ENCODE measurements at regions of chr20 and their contacts with region 1.

Region 1: DNA sequence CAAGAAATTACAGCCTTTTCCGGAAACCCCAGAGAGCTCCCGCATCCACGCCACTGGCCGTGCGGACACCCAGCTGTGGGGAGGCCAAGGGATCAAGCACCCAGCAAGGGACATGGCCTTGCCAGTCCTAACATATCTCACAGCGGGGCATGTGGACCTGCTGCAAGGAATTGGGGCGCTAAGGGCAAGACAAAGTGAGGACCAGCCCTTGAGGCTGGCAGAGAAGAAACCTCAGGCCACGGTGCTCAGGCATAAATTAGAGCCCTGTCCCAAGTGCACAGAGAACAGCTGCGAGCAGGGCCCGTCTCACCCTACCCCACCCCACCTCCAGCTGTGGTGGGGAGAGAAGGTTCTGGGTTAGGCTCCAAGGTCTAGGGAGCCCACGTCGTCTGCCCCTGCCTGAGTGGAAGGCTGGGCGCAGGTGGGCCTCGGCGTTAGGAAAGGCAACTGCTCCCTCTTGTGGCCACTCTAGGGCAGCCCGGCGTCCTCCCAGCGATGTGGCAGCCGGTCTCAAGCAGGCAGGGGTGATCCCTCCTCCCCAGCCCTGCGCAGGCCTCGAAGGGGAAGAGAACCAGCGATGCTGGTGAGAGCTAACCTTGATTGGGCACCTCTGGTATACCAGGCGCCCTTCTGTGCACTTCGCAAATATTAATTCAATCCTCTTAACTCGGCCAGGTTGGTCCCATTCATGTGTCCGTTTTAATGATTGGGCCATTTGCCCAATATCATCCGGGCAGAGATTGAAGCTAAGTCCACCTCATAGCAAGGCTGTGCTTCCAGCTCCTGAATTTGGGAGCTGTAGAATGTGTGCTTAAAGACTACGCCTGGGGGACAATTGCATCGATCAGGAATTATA is 235.8 kb downstream of the NFATC2 start:
- DNase-seq: peak; percentile 90
- H3K4me3 ChIP-seq: peak overlapping the region in 1 of 2 experiments; percentile 35; a peak in 1 of 4 replicates
- H3K27ac ChIP-seq: peak overlapping the region in 1 of 2 experiments; percentile 22; a peak in 1 of 4 replicates
- H3K4me1 ChIP-seq: peaks cover 0 to 13% of the 10 kb centered on the region in 2 experiments; a peak in 1 of 4 replicates
- H3K27me3 ChIP-seq: no peaks in the 10 kb centered on the region
- CTCF ChIP-seq: peak; percentile 88
- EP300 ChIP-seq: no peak
- RAD21 ChIP-seq: peak; percentile 98

Region 2: DNA sequence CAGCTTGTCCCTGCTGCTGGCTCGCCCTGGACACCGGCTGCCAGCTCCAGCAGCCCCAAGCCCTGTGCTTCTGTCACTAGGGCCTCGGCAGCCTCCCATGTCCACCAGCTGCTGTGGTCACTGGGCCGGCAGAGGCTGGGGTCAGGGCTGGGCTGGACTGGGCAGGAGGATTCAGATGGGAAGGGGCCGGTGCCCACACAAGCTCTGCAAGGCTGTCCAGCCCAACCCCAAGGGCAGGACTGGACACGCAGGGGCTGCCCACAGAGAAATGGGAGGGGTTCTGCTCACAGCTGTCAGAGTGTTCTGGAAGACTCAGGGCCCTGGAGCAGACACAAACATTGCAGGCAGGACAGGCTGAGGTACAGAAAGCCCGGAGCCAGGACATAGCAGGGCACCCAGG is 441.1 kb before region 1 on chr20:
- CTCF ChIA-PET with region 1: no interaction called
- POLR2A ChIA-PET with region 1: no interaction called
- DNase-seq: no peak
- H3K4me3 ChIP-seq: no peak overlapping the region
- H3K27ac ChIP-seq: no peak overlapping the region
- H3K4me1 ChIP-seq: peaks cover 0 to 11% of the 10 kb centered on the region in 2 experiments; a peak in 1 of 4 replicates
- H3K27me3 ChIP-seq: no peaks in the 10 kb centered on the region
- CTCF ChIP-seq: no peak
- EP300 ChIP-seq: no peak
- RAD21 ChIP-seq: no peak

Region 3: DNA sequence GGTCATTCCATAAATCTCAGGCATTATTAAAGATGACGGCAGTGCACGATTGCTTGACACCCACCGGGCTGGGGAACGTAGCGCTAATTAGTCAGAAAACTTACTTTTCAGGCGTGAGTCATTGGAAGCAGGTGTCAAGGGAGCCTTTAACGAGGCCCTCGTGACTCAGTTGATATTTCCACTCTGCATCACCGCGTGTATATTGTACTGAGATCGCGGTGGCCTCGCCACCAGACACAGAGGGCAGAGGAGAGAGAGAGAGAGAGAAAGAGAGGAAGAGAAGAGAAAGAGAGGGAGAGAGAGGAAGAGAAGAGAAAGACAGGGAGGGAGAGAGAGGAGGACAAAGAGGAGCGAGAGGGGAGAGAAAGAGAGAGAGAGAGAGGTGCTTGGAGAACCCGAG is 305.0 kb before region 1 on chr20:
- CTCF ChIA-PET with region 1: interaction called, 33 read pairs
- POLR2A ChIA-PET with region 1: no interaction called
- DNase-seq: no peak
- H3K4me3 ChIP-seq: no peak overlapping the region
- H3K27ac ChIP-seq: no peak overlapping the region
- H3K4me1 ChIP-seq: no peaks in the 10 kb centered on the region
- H3K27me3 ChIP-seq: no peaks in the 10 kb centered on the region
- CTCF ChIP-seq: no peak
- EP300 ChIP-seq: no peak
- RAD21 ChIP-seq: no peak

Region 4: GRCh38 chr20:51029963-51030920 is 276.5 kb before region 1 on chr20:
- CTCF ChIA-PET with region 1: interaction called, 11 read pairs
- POLR2A ChIA-PET with region 1: no interaction called
- DNase-seq: no peak
- H3K4me3 ChIP-seq: no peak overlapping the region
- H3K27ac ChIP-seq: no peak overlapping the region
- H3K4me1 ChIP-seq: peaks cover 0 to 18% of the 10 kb centered on the region in 2 experiments; a peak in 2 of 4 replicates
- H3K27me3 ChIP-seq: no peaks in the 10 kb centered on the region; the same call in 1 of the 2 replicates
- CTCF ChIP-seq: no peak
- EP300 ChIP-seq: no peak
- RAD21 ChIP-seq: no peak

Region 5: DNA sequence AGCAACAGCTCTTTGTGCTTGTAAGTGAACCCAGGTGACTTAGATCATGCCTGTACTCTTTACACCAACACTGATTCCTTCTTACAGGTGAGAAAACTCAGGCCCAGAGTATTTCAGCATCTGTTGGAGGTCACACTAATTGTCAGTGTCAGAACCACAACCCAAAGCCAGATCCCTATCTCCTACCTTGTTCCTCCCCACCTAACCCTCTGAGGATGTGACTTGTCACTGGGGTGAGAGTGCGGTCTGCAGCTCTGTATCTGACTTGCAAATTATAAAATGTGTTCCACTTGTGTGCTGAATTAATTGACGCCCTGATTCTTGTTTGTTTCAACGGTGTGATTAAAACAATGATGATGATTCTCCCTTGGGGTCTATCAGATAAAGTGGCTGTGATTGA is 51.3 kb before region 1 on chr20:
- CTCF ChIA-PET with region 1: interaction called, 12 read pairs
- POLR2A ChIA-PET with region 1: no interaction called
- DNase-seq: no peak
- H3K4me3 ChIP-seq: no peak overlapping the region
- H3K27ac ChIP-seq: no peak overlapping the region
- H3K4me1 ChIP-seq: peaks cover 0 to 9% of the 10 kb centered on the region in 2 experiments; a peak in 1 of 4 replicates
- H3K27me3 ChIP-seq: no peaks in the 10 kb centered on the region
- CTCF ChIP-seq: no peak
- EP300 ChIP-seq: no peak
- RAD21 ChIP-seq: no peak

Region 6: DNA sequence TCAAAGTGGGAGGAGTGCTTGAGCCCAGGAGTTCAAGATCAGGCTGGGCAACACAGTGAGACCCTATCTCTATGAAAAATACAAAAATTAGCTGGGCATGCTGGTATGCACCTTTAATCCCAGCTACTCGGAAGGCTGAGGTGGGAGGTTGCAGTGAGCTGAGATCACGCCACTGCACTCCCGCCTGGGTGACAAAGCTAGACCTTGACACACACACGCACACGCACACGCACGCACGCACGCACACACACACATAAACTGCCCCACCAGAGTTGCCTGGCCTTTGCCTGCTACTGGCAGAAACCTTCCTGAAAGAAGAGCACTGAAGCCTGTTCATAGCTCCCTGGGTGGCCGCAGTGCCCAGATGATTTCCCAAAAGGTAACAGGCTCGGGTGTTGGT is 11.2 kb before region 1 on chr20:
- CTCF ChIA-PET with region 1: interaction called, 18 read pairs
- POLR2A ChIA-PET with region 1: no interaction called
- DNase-seq: no peak
- H3K4me3 ChIP-seq: no peak overlapping the region
- H3K27ac ChIP-seq: no peak overlapping the region
- H3K4me1 ChIP-seq: peaks cover 0 to 7% of the 10 kb centered on the region in 2 experiments; a peak in 1 of 4 replicates
- H3K27me3 ChIP-seq: no peaks in the 10 kb centered on the region
- CTCF ChIP-seq: no peak
- EP300 ChIP-seq: no peak
- RAD21 ChIP-seq: no peak

Region 7: GRCh38 chr20:51428401-51429143 is 121.8 kb after region 1 on chr20:
- CTCF ChIA-PET with region 1: no interaction called
- POLR2A ChIA-PET with region 1: no interaction called
- DNase-seq: peak; percentile 55
- H3K4me3 ChIP-seq: no peak overlapping the region
- H3K27ac ChIP-seq: peak overlapping the region; percentile 43 to 51; a peak in 2 of 4 replicates
- H3K4me1 ChIP-seq: peaks cover 0 to 11% of the 10 kb centered on the region in 2 experiments; a peak in 1 of 4 replicates
- H3K27me3 ChIP-seq: no peaks in the 10 kb centered on the region
- CTCF ChIP-seq: no peak
- EP300 ChIP-seq: peak in 1 of 2 experiments; percentile 16; a peak in 1 of 4 replicates
- RAD21 ChIP-seq: no peak

Region 8: DNA sequence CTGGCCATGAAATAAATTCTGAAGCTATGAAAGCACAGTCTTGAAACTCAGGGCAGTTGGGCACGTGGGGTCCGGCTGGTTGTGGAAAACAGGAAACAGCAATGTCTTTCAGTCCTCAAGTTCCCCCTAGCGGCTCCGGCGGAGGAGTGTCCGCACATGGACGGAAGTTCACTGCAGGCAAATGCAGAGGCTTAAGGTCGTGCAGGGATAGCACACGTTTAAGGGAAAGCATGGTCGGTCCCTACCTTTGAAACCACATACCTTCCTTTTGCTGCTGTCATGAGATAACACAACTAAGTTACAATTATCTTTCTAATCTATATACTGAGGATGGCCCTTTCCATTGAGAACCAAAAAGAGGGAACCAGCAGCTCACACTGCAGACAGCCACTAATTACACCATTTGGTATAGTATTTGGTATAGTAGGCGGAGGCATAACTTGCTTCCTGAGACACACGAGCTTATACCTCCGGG is 288.4 kb after region 1 on chr20:
- CTCF ChIA-PET with region 1: interaction called, 10 read pairs
- POLR2A ChIA-PET with region 1: no interaction called
- DNase-seq: peak; percentile 83
- H3K4me3 ChIP-seq: no peak overlapping the region; a peak in 1 of 4 replicates
- H3K27ac ChIP-seq: peak overlapping the region in 1 of 2 experiments; percentile 50; a peak in 1 of 4 replicates
- H3K4me1 ChIP-seq: peaks cover 6 to 12% of the 10 kb centered on the region in 2 experiments; a peak in 2 of 4 replicates
- H3K27me3 ChIP-seq: no peaks in the 10 kb centered on the region
- CTCF ChIP-seq: peak; percentile 90
- EP300 ChIP-seq: no peak
- RAD21 ChIP-seq: peak; percentile 96

Region 9: GRCh38 chr20:51750037-51750763 is 443.5 kb after region 1 on chr20:
- CTCF ChIA-PET with region 1: no interaction called
- POLR2A ChIA-PET with region 1: no interaction called
- DNase-seq: peak; percentile 36
- H3K4me3 ChIP-seq: no peak overlapping the region
- H3K27ac ChIP-seq: peak overlapping the region; percentile 9 to 96; a peak in 3 of 4 replicates
- H3K4me1 ChIP-seq: peaks cover 8 to 22% of the 10 kb centered on the region in 2 experiments; a peak in 3 of 4 replicates
- H3K27me3 ChIP-seq: no peaks in the 10 kb centered on the region
- CTCF ChIP-seq: no peak
- EP300 ChIP-seq: peak in 1 of 2 experiments; percentile 56; a peak in 1 of 4 replicates
- RAD21 ChIP-seq: no peak

Region 10: DNA sequence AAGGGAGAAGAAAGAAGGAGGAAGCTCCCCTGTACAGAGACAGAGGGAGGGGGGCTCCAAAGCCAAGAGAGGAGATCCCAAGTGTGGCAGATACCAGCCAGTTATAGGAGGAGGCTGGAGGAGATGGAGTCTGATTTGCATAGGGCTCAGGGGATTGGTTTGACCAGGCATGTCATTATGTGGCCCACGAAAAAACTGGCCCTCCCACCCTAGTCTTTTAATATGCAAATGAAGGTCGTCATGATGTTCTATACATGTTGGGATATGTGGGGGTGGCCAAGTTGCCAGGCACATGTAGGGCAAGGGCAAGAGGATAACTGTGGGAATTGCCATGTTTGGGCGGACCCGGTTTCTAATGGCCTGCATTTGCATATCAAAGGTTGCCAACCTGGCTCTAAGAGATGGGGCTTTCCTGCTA is 902.4 kb after region 1 on chr20:
- CTCF ChIA-PET with region 1: no interaction called
- POLR2A ChIA-PET with region 1: no interaction called
- DNase-seq: no peak
- H3K4me3 ChIP-seq: no peak overlapping the region
- H3K27ac ChIP-seq: no peak overlapping the region
- H3K4me1 ChIP-seq: no peaks in the 10 kb centered on the region; a peak in 1 of 4 replicates
- H3K27me3 ChIP-seq: no peaks in the 10 kb centered on the region
- CTCF ChIP-seq: no peak
- EP300 ChIP-seq: no peak
- RAD21 ChIP-seq: no peak

Measured in SK-N-SH (cell line).